ENCODE measurements at regions of chr12 and their contacts with region 1.

Region 1: GRCh38 chr12:12032851-12033588 is 37.7 kb upstream of the BCL2L14 start:
- DNase-seq: peak; percentile 59
- ATAC-seq: peak; percentile 83
- H3K4me3 ChIP-seq: peak overlapping the region; percentile 20 to 53; a peak in 3 of 4 replicates
- H3K27ac ChIP-seq: no peak overlapping the region
- H3K4me1 ChIP-seq: no peaks in the 10 kb centered on the region
- H3K27me3 ChIP-seq: no peaks in the 10 kb centered on the region
- CTCF ChIP-seq: peak; percentile 85

Region 2: GRCh38 chr12:11553871-11554533 is 479.0 kb before region 1 on chr12:
- CTCF ChIA-PET with region 1: interaction called, 3 read pairs
- POLR2A ChIA-PET with region 1: no interaction called
- in situ Hi-C with region 1: no loop called
- intact Hi-C with region 1: loop called (anchors 1 kb)
- DNase-seq: peak; percentile 13
- ATAC-seq: peak; percentile 69; the same call in 1 of the 2 replicates
- H3K4me3 ChIP-seq: no peak overlapping the region
- H3K27ac ChIP-seq: no peak overlapping the region
- H3K4me1 ChIP-seq: no peaks in the 10 kb centered on the region
- H3K27me3 ChIP-seq: peaks cover 5% of the 10 kb centered on the region
- CTCF ChIP-seq: peak; percentile 76